ENCODE measurements at regions of chr19 and their contacts with region 1.

Region 1: DNA sequence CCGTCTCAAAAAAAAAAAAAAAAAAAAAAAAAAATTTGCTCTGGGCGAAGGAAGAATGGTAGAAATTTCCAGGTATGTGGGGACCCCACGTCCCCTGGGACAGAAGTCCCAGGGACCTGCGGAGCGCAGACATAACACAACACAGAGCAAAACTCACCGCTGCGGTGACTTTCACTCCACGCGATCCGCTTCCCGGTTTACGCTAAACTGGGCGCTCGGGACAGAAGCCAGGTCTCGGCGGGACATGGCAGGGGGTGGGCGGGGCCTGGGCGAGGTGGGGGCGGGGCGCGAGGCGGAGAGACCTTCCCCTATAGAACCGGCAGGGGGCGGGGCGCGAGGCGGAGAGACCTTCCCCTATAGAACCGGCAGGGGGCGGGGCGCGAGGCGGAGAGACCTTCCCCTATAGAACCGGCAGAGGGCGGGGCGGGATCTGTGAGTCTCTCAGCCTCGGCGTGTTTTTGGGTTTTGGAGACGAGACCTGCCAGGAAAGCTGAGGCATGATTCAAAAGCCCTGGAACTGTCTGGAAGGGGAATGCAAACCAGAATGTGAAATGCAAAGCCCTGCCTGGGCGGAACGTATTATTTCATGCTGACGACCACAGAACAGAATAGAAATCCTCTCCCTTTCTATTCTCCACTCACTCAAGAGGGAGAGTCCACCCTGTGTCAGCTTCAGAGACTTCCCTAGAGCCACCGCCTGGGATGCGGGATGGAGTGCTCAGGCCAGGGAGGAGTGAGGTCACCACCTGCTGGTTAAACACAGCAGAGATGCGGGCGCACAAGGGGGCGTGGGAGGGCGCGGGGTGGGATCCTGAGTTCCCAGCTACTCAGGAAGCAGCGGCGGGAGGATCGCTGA is 20.2 kb upstream of the ERVV-1 start:
- DNase-seq: peak; percentile 79
- ATAC-seq: peak; percentile 68
- H3K4me3 ChIP-seq: peak overlapping the region; percentile 67
- H3K27ac ChIP-seq: 0 out of 2 replicates have a peak overlapping the region, but pooled peaks have one; percentile 38
- H3K4me1 ChIP-seq: peaks cover 22% of the 10 kb centered on the region
- H3K27me3 ChIP-seq: no peaks in the 10 kb centered on the region
- CTCF ChIP-seq: no peak; the same call in 1 of the 2 replicates

Region 2: DNA sequence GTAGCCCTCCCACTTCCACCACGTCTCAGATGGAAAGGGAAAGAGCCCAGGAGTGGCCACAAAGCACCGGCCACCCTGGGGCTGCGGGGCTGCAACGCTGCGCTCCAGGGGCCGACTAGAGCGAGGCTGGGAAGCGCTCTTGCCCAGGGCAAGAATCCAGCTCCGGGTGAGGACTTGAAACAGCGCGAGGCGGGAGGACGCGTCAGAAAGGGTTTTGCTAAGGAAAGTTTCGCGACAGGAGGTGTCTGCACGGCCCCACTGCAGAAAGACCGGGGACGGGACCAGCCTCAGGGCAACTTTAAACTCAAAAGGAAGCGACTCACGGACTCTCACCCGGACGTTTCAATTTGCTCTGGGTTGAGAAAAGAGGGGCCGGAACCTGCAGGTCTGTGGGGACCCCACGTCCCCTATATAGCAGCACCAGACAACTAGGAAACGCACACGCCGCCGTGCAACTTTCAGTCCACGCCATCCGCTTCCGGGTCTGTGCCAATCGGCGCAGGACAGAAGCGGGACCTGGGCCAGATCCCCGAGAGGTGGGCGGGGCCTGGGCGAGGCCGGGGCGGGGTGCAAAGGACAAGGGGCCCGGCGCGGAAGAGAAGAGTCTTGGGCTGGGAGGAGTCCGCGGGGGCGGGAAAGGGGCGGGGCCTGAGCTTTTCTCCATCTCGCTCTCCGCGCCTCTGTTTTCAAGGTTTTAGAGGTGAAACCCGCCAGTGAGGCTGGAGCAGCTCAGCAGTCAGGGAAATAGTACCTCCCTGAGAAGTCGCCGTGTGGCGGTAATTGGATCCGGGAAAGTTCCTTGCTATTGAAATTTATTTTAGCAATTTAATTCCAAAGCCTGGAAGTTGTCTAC is 30.9 kb before region 1 on chr19 and contains the start of gene ZNF816:
- CTCF ChIA-PET with region 1: interaction called, 4 read pairs
- POLR2A ChIA-PET with region 1: no interaction called
- intact Hi-C with region 1: loop called (anchors 1 kb)
- DNase-seq: peak; percentile 97
- ATAC-seq: peak; percentile 91
- H3K4me3 ChIP-seq: peak within 1 kb of the TSS; percentile 82
- H3K27ac ChIP-seq: peak within 1 kb of the TSS; percentile 40
- H3K4me1 ChIP-seq: peaks cover 21% of the 10 kb centered on the region
- H3K27me3 ChIP-seq: no peaks in the 10 kb centered on the region
- CTCF ChIP-seq: no peak
- total RNA-seq, gene ZNF816: 7.6 and 10.2 TPM in 2 replicates

Region 3: GRCh38 chr19:53103198-53103944 is 109.8 kb after region 1 on chr19 and contains the start of gene ZNF160:
- CTCF ChIA-PET with region 1: no interaction called
- POLR2A ChIA-PET with region 1: no interaction called
- intact Hi-C with region 1: loop called (anchors 1 kb)
- DNase-seq: peak; percentile 99
- ATAC-seq: peak; percentile 93
- H3K4me3 ChIP-seq: peak within 1 kb of the TSS; percentile 97
- H3K27ac ChIP-seq: peak within 1 kb of the TSS; percentile 56
- H3K4me1 ChIP-seq: peaks cover 9% of the 10 kb centered on the region
- H3K27me3 ChIP-seq: no peaks in the 10 kb centered on the region
- CTCF ChIP-seq: no peak
- total RNA-seq, gene ZNF160: 22.3 and 25.1 TPM in 2 replicates

Measured in PC-3 (cell line).